Ovary (tissue), 10 donors: ENCODE measurements at regions of chr11 and their contacts with region 1.

Region 1: DNA sequence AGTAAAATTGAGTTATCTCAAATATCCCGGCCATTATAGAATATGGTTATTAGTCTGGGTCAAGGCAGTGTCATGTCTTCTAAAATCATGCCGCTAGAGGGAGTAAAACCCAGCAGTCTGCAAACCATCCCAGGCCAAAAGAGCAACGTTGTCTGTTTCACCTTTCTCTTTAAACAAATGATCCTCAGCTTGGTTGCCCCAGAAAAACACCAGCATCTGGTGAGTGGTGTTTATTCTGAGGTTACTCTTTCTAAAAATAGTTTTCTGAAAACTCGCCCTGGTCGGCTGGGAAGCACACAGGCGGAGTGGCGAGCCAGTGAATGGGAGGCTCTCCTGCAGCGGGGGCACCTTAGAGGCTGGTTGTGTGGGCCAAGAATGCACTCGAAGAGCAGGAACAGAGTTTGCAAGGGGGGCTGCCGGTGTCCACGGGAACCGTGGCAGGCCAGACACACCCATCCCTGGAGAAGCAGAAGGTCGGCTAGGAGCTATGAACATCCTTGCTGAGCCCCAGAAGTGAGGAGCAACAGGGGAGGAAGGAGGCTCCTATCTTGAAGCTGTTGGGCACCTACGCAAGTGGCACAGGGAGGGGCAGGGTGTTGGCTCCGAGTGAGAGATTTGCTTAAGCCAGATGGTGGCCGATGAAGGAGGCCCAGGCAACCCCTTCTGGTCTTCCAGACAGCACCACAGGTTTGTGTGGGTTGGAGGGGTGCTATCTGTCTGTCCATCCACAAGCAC is 297.1 kb downstream of the ETS1 start:
- DNase-seq: peak; percentile 41 to 63 (median 48)
- H3K4me3 ChIP-seq: no peak overlapping the region
- H3K27ac ChIP-seq: no peak overlapping the region
- H3K4me1 ChIP-seq: peaks cover 3% of the 10 kb centered on the region
- H3K27me3 ChIP-seq: no peaks in the 10 kb centered on the region
- CTCF ChIP-seq: peak; percentile 45 to 82 (median 65)
- EP300 ChIP-seq: no peak
- POLR2A ChIP-seq: no peak

Region 2: GRCh38 chr11:128116885-128117284 is 173.4 kb before region 1 on chr11:
- intact Hi-C with region 1: no loop called
- DNase-seq: no peak
- H3K4me3 ChIP-seq: no peak overlapping the region
- H3K27ac ChIP-seq: no peak overlapping the region
- H3K4me1 ChIP-seq: peaks cover 1% of the 10 kb centered on the region
- H3K27me3 ChIP-seq: no peaks in the 10 kb centered on the region
- CTCF ChIP-seq: no peak
- EP300 ChIP-seq: no peak
- POLR2A ChIP-seq: no peak

Region 3: GRCh38 chr11:128172046-128172878 is 118.0 kb before region 1 on chr11:
- intact Hi-C with region 1: loop called in 1 of 4 experiments (anchors 10 kb)
- DNase-seq: peak; percentile 68 to 87 (median 84)
- H3K4me3 ChIP-seq: no peak overlapping the region
- H3K27ac ChIP-seq: no peak overlapping the region
- H3K4me1 ChIP-seq: no peaks in the 10 kb centered on the region
- H3K27me3 ChIP-seq: no peaks in the 10 kb centered on the region
- CTCF ChIP-seq: peak; percentile 59 to 79 (median 72)
- EP300 ChIP-seq: no peak
- POLR2A ChIP-seq: no peak

Region 4: DNA sequence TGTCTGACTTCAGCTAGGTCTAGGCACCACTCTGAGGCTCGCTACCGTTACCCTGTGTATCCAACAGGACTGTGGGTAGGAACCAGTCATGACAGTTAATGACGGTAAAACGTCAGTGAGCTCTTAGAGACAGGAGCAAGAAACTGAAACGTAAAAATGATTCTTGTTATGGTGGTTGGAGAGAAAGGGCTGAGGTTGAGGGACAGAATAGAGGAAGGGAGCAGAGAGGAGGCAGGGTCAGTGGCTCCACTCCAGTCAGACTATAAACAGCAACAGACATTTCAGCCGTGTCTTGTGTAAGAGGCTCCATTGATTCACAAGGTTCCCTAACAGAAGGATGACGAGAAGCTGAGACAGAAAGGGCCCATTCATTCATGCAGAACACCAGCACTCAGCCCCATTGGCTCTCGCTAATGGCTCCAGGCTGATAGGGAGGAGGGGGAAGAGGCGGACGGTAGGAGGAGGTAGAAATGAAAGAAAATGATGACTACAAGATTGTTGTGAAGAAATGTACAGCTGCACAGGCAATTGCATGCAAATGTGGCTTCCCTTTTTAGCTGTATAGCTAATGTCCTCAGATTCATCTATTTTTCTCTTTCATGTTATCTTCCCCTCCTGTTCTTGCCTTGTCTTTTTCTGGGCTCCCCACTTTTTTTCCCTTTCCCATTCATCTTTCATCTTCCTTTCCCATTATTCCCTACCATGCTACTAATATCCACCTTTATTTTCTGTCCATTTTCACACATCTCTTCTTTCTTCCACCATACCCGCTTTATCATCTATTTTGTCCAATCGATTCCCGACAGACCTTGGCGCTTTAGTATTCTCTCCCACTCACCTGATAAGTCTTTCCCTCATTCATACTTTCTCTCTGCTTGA is 262.7 kb after region 1 on chr11:
- intact Hi-C with region 1: loop called in 1 of 4 experiments (anchors 10 kb)
- DNase-seq: no peak
- H3K4me3 ChIP-seq: no peak overlapping the region
- H3K27ac ChIP-seq: no peak overlapping the region
- H3K4me1 ChIP-seq: peaks cover 8% of the 10 kb centered on the region
- H3K27me3 ChIP-seq: no peaks in the 10 kb centered on the region
- CTCF ChIP-seq: no peak
- EP300 ChIP-seq: no peak
- POLR2A ChIP-seq: no peak

Region 5: DNA sequence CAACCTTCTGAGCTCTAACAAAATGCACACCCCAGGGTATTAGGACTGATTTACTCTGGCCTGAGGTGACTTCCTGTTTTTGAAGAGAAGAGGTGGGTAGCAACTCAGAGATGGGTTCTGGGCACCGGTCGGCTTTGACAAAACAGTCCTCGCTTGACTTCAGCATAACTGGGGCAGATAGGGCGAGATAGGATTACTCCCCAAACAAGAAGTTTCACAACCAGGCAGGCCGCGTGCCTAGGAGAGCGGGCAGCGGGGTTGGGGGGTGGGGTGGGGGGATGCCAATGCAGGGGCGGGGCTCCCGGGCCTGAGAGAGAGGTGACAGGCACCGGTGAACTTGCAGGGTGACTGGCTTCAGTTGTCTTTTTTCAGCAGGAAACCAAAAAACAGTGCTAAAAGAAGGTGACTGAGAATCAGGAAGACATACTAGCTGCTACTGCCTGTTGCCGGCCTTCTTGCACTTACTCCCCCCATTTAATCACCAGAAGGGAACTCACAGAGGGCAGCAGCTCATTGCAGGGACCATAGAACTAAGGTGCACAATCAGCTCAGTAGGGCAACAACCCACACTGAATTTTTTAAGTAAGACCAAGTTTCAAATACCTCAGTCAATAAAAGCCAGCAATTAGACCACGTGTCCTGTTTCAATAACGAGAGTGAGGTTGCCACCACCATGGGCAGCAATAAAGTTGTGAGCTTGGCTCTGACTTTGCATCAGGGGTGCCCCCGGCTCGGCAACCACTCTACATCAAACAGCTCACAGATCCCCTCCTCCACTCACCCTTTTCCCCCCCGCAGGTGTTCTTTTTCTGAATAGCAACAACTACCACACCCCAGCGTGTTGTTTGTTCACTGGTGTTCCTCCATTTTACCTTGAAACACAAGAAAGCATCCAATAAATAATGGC is 334.2 kb after region 1 on chr11:
- intact Hi-C with region 1: loop called in 1 of 4 experiments (anchors 5 kb)
- DNase-seq: no peak
- H3K4me3 ChIP-seq: no peak overlapping the region
- H3K27ac ChIP-seq: no peak overlapping the region
- H3K4me1 ChIP-seq: no peaks in the 10 kb centered on the region
- H3K27me3 ChIP-seq: no peaks in the 10 kb centered on the region
- CTCF ChIP-seq: no peak
- EP300 ChIP-seq: no peak
- POLR2A ChIP-seq: no peak

Region 6: GRCh38 chr11:128824191-128825049 is 534.1 kb after region 1 on chr11:
- intact Hi-C with region 1: loop called in 1 of 4 experiments (anchors 10 kb)
- DNase-seq: peak in 3 of 5 donors; percentile 53 to 67 (median 55)
- H3K4me3 ChIP-seq: no peak overlapping the region
- H3K27ac ChIP-seq: peak overlapping the region in 1 of 2 donors; percentile 36
- H3K4me1 ChIP-seq: no peaks in the 10 kb centered on the region
- H3K27me3 ChIP-seq: no peaks in the 10 kb centered on the region
- CTCF ChIP-seq: no peak
- EP300 ChIP-seq: no peak
- POLR2A ChIP-seq: no peak